HEK293 (cell line): ENCODE measurements at regions of chr6 and their contacts with region 1.

Region 1: DNA sequence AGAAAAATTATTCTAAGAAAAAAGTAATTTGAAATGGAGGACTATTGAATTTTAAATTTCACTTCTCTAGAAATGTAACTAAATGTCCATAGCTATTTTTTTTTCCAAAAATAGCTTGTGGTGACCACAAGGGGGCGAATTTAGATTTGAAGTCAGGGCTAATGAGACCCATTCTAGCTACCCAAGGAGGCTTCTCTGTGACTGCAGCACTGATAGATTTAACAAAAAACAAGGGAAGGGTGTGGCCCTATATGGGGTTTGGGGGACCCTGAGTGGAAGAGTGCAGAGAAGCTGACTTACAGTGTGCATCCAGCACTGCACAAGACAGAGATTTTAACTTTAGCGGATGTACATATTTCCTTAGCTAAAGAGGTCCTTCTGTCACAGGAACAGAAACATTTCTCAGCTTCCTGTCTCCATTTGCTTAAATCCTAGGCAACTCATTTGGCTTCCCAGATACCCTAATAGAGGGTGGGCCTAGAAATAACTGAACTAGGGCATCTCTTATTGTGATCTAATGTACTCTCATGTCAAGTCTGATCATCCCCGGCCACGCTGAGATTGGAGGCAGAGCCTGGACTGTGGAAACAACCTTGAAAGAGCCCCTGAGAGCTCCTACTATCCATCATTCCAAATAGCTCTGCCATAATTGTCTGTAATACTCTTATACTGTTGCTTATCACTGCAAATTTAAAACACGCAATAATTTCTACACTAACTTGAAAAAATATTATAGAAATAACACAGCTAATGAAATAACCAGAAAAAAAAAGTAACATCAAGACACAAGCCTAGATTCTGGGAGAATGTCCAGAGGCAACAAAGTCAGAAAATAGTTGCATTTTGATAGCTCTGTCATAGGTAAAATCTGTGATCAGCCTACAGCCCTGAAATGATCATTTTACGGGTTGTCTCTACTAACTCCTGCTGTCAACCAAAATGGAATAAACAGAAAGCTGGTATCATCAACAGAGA is 93.6 kb downstream of the SNAP91 start:
- H3K4me3 ChIP-seq: no peak overlapping the region
- H3K27ac ChIP-seq: no peak overlapping the region
- H3K4me1 ChIP-seq: no peaks in the 10 kb centered on the region
- CTCF ChIP-seq: no peak

Region 2: DNA sequence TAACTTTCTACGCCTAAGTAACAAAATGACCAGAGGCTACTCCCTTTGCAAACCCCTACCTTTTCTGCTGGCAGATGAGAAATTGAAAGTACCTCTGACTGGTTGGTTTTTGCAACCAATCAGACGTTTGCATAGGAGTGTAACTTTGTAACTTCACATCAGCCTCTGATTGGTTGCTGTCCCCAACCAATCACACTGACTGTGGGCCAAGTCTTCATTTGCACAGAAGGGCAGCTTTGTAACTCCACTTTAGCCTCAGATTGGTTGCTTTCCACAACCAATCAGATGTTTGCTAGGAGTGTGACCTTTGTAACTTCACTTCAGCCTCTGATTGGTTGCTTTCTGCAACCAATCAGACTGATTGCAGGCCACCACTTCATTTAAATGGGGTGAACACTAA is 273.5 kb before region 1 on chr6:
- CTCF ChIA-PET with region 1: no interaction called
- POLR2A ChIA-PET with region 1: no interaction called
- H3K4me3 ChIP-seq: no peak overlapping the region
- H3K27ac ChIP-seq: no peak overlapping the region
- H3K4me1 ChIP-seq: no peaks in the 10 kb centered on the region
- CTCF ChIP-seq: no peak

Region 3: GRCh38 chr6:83597051-83597450 is 18.3 kb before region 1 on chr6:
- CTCF ChIA-PET with region 1: interaction called, 23 read pairs
- POLR2A ChIA-PET with region 1: no interaction called
- H3K4me3 ChIP-seq: no peak overlapping the region
- H3K27ac ChIP-seq: no peak overlapping the region
- H3K4me1 ChIP-seq: no peaks in the 10 kb centered on the region
- CTCF ChIP-seq: no peak

Region 4: GRCh38 chr6:83603551-83603950 is 11.8 kb before region 1 on chr6:
- CTCF ChIA-PET with region 1: interaction called, 23 read pairs
- POLR2A ChIA-PET with region 1: no interaction called
- H3K4me3 ChIP-seq: no peak overlapping the region
- H3K27ac ChIP-seq: no peak overlapping the region
- H3K4me1 ChIP-seq: peaks cover 5% of the 10 kb centered on the region; the same call in 1 of the 2 replicates
- CTCF ChIP-seq: no peak

Region 5: GRCh38 chr6:83633149-83633548 is 17.8 kb after region 1 on chr6:
- CTCF ChIA-PET with region 1: interaction called, 14 read pairs
- POLR2A ChIA-PET with region 1: no interaction called
- H3K4me3 ChIP-seq: no peak overlapping the region
- H3K27ac ChIP-seq: no peak overlapping the region
- H3K4me1 ChIP-seq: no peaks in the 10 kb centered on the region
- CTCF ChIP-seq: no peak

Region 6: GRCh38 chr6:83824388-83824801 is 209.1 kb after region 1 on chr6:
- CTCF ChIA-PET with region 1: no interaction called
- POLR2A ChIA-PET with region 1: no interaction called
- H3K4me3 ChIP-seq: no peak overlapping the region
- H3K27ac ChIP-seq: no peak overlapping the region
- H3K4me1 ChIP-seq: peaks cover 4% of the 10 kb centered on the region; the same call in 1 of the 2 replicates
- CTCF ChIP-seq: no peak

Region 7: GRCh38 chr6:83859410-83860358 is 244.4 kb after region 1 on chr6 and contains the start of gene CYB5R4:
- CTCF ChIA-PET with region 1: interaction called, 11 read pairs
- POLR2A ChIA-PET with region 1: interaction called, 5 read pairs
- H3K4me3 ChIP-seq: peak within 1 kb of the TSS; percentile 91
- H3K27ac ChIP-seq: no peak within 1 kb of the TSS; the same call in 1 of the 2 replicates
- H3K4me1 ChIP-seq: peaks cover 5% of the 10 kb centered on the region; the same call in 1 of the 2 replicates
- CTCF ChIP-seq: peak; percentile 95

Region 8: GRCh38 chr6:84220809-84221409 is 605.6 kb after region 1 on chr6:
- CTCF ChIA-PET with region 1: interaction called, 21 read pairs
- POLR2A ChIA-PET with region 1: no interaction called
- H3K4me3 ChIP-seq: no peak overlapping the region
- H3K27ac ChIP-seq: no peak overlapping the region
- H3K4me1 ChIP-seq: no peaks in the 10 kb centered on the region
- CTCF ChIP-seq: no peak